HCT116 (cell line): ENCODE measurements at regions of chr7 and their contacts with region 1.

Region 1: DNA sequence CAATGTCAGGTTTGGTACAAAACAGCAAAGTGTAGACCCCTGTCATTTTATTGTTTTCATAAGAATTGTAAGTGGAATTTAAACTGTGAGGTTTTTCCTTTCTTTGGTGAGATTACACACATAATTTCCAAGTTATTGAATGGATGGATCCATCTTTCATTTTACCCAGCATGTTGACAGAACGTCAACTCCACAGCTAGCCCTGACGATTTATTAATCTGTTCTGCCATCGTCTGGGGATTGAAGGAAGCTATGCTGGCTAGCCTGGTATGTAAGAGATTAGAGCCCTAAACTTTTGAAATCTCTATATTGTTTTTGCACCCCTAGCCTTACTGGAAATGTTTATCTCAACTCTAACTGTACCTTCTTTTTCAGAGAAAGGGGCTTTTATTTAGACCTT is 8.6 kb downstream of the WNT16 start:
- DNase-seq: no peak
- ATAC-seq: no peak
- H3K4me3 ChIP-seq: no peak overlapping the region
- H3K27ac ChIP-seq: peak overlapping the region; percentile 0; the same call in 1 of the 2 replicates
- H3K4me1 ChIP-seq: peaks cover 19 to 63% of the 10 kb centered on the region in 2 experiments; a peak in 3 of 4 replicates
- H3K27me3 ChIP-seq: no peaks in the 10 kb centered on the region
- CTCF ChIP-seq: no peak
- POLR2A ChIP-seq: no peak
- RAD21 ChIP-seq: peak; percentile 41

Region 2: DNA sequence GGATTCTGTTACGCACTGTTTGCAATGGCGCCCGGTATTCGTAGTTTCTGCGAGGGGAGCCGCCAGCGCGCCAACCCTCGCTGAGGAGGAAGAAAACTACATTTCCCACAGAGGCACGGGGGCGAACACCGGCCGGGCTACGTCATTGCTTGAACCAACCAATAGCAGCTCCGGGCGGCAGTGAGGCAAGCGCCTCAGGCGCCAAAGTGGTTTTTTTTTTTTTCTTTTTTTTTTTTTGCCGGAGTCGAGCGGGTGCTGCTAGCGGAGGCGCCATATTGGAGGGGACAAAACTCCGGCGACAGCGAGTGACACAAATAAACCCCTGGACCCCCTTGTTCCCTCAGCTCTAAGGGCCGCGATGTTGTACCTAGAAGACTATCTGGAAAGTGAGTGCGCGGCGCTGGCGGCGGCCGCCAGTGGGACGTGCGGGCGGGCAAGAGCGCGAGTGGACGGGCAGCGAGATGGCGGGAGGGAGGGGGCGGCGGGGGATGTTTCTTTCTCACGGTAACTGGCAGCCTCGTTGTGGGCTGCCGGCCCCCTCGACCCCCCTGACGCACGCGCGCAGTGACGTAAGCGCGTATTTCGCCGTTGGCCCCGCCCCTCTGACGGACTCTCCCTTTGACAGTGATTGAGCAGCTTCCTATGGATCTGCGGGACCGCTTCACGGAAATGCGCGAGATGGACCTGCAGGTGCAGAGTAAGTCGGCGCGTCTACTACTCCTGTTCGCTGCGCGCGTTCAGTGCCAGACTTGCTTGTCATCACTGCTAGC is 386.7 kb before region 1 on chr7 and contains the start of gene ING3:
- CTCF ChIA-PET with region 1: no interaction called
- POLR2A ChIA-PET with region 1: interaction called, 3 read pairs
- RAD21 ChIA-PET with region 1: no interaction called
- intact Hi-C with region 1: loop called (anchors 5 kb)
- DNase-seq: peak; percentile 95
- ATAC-seq: peak; percentile 92
- H3K4me3 ChIP-seq: peak within 1 kb of the TSS; percentile 61 to 83
- H3K27ac ChIP-seq: peak within 1 kb of the TSS; percentile 67
- H3K4me1 ChIP-seq: peaks cover 3 to 15% of the 10 kb centered on the region in 2 experiments; a peak in 3 of 4 replicates
- H3K27me3 ChIP-seq: no peaks in the 10 kb centered on the region
- CTCF ChIP-seq: no peak
- POLR2A ChIP-seq: no peak
- RAD21 ChIP-seq: no peak
- total RNA-seq, gene ING3: 16.2 TPM

Region 3: DNA sequence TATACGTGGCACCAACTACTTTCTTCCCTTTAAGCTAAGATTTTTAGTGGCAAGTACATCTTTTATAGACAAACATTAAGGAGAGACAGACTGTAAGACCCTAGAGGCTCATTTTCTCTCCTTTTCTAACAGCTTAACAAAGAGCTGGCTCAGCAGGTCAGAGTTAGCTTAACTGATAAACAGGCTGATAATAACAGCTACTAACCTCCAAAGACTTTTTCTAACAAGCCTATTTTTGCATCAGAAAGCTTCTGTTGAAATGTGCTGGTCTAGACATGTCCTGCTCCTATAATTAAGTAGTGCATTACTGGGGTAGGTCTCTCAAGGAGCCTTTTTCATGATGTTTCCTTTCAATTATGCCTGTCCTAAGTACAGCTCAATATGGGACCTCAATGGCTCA is 297.0 kb after region 1 on chr7:
- CTCF ChIA-PET with region 1: no interaction called
- POLR2A ChIA-PET with region 1: no interaction called
- RAD21 ChIA-PET with region 1: no interaction called
- intact Hi-C with region 1: no loop called
- DNase-seq: no peak
- ATAC-seq: no peak
- H3K4me3 ChIP-seq: no peak overlapping the region
- H3K27ac ChIP-seq: no peak overlapping the region
- H3K4me1 ChIP-seq: no peaks in the 10 kb centered on the region
- H3K27me3 ChIP-seq: no peaks in the 10 kb centered on the region
- CTCF ChIP-seq: no peak
- POLR2A ChIP-seq: no peak
- RAD21 ChIP-seq: no peak